ENCODE measurements at regions of chr11 and their contacts with region 1.

Region 1: GRCh38 chr11:94623120-94623735 is 56.1 kb downstream of the PIWIL4 start:
- DNase-seq: peak; percentile 77
- ATAC-seq: peak; percentile 98
- H3K4me3 Mint-ChIP-seq: no peak overlapping the region
- H3K27ac Mint-ChIP-seq: no peak overlapping the region
- H3K4me1 Mint-ChIP-seq: peaks cover 23% of the 10 kb centered on the region
- H3K27me3 Mint-ChIP-seq: peaks cover 8% of the 10 kb centered on the region; the same call in 1 of the 2 replicates
- CTCF ChIP-seq: peak; percentile 79

Region 2: GRCh38 chr11:94635072-94635471 is 11.8 kb after region 1 on chr11:
- CTCF ChIA-PET with region 1: interaction called, 12 read pairs
- POLR2A ChIA-PET with region 1: no interaction called
- DNase-seq: no peak
- ATAC-seq: peak; percentile 80
- H3K4me3 Mint-ChIP-seq: no peak overlapping the region
- H3K27ac Mint-ChIP-seq: no peak overlapping the region
- H3K4me1 Mint-ChIP-seq: peaks cover 54% of the 10 kb centered on the region
- H3K27me3 Mint-ChIP-seq: no peaks in the 10 kb centered on the region; the same call in 1 of the 2 replicates
- CTCF ChIP-seq: no peak

Region 3: DNA sequence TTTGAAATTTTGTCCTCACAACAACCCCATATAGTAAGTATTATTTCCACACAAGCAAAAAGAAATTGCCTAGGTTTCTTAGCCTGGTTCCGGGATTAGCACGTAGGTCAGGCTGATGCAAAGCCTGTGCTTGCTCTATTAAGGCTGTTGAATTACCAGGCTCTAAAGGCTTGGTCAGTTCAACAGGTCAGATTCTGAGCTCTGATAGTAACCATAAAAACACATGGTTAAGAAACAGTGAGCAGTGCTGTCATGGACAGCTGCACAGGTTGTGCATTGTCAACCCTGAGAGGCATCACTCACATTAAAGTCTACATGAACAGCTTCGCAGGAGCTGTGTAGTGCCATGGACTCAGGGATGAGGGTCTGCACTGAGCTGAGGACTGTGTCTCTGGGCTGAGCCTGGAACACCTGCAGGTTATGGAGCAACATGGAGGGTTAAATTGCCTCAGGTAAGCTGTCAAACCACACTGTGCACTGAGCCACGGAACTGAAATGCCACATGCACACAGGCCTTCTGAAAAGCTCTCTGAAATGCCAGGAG is 42.0 kb after region 1 on chr11:
- CTCF ChIA-PET with region 1: interaction called, 10 read pairs
- POLR2A ChIA-PET with region 1: no interaction called
- DNase-seq: no peak
- ATAC-seq: no peak
- H3K4me3 Mint-ChIP-seq: no peak overlapping the region
- H3K27ac Mint-ChIP-seq: peak overlapping the region; percentile 73
- H3K4me1 Mint-ChIP-seq: peaks cover 64% of the 10 kb centered on the region
- H3K27me3 Mint-ChIP-seq: no peaks in the 10 kb centered on the region; the same call in 1 of the 2 replicates
- CTCF ChIP-seq: no peak

Region 4: GRCh38 chr11:94741022-94741679 is 117.9 kb after region 1 on chr11:
- CTCF ChIA-PET with region 1: interaction called, 30 read pairs
- POLR2A ChIA-PET with region 1: no interaction called
- DNase-seq: peak; percentile 27
- ATAC-seq: peak; percentile 82
- H3K4me3 Mint-ChIP-seq: peak overlapping the region; percentile 83
- H3K27ac Mint-ChIP-seq: no peak overlapping the region
- H3K4me1 Mint-ChIP-seq: peaks cover 28% of the 10 kb centered on the region
- H3K27me3 Mint-ChIP-seq: peaks cover 23% of the 10 kb centered on the region
- CTCF ChIP-seq: peak; percentile 33; the same call in 1 of the 2 replicates

Region 5: GRCh38 chr11:94767761-94768601 is 144.8 kb after region 1 on chr11 and contains the start of gene AMOTL1:
- CTCF ChIA-PET with region 1: interaction called, 12 read pairs
- POLR2A ChIA-PET with region 1: no interaction called
- DNase-seq: peak; percentile 89
- ATAC-seq: peak; percentile 81
- H3K4me3 Mint-ChIP-seq: no peak within 1 kb of the TSS; the same call in 1 of the 2 replicates
- H3K27ac Mint-ChIP-seq: no peak within 1 kb of the TSS
- H3K4me1 Mint-ChIP-seq: peaks cover 46% of the 10 kb centered on the region
- H3K27me3 Mint-ChIP-seq: peaks cover 21% of the 10 kb centered on the region
- CTCF ChIP-seq: no peak
- total RNA-seq, gene AMOTL1: 23.4 to 39.8 TPM (median 26.4 TPM) in 3 replicates

Region 6: DNA sequence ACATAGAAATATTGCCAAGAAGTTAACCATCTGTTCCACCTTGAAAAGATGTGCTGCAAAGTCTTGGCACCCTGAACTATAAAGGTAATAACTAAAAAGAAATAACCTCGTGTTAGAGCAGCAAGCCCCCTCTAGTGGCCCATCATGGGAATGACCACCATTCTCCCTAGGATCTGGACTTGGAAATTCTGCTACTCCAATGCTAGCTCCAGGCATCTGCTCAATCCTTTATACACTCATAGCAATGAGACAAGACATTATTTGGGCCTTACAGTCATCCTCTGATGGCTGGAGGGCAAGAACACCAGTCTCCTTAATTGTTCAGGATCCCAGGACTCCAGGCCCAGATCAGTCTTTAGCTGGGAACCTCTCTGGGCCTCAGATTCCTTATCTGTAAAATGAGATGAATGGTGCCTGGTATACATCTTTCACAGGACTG is 274.1 kb after region 1 on chr11:
- CTCF ChIA-PET with region 1: interaction called, 30 read pairs
- POLR2A ChIA-PET with region 1: no interaction called
- DNase-seq: peak; percentile 64
- ATAC-seq: peak; percentile 73
- H3K4me3 Mint-ChIP-seq: no peak overlapping the region
- H3K27ac Mint-ChIP-seq: no peak overlapping the region
- H3K4me1 Mint-ChIP-seq: peaks cover 8% of the 10 kb centered on the region; the same call in 1 of the 2 replicates
- H3K27me3 Mint-ChIP-seq: no peaks in the 10 kb centered on the region
- CTCF ChIP-seq: peak; percentile 90